ENCODE measurements at regions of chr1 and their contacts with region 1.

Region 1: GRCh38 chr1:24822887-24823286 is 77.6 kb downstream of the CLIC4 start:
- DNase-seq: no peak
- H3K4me3 ChIP-seq: no peak overlapping the region
- H3K27ac ChIP-seq: peak overlapping the region; percentile 42
- H3K4me1 ChIP-seq: peaks cover 30% of the 10 kb centered on the region; the same call in 1 of the 2 replicates
- H3K27me3 ChIP-seq: no peaks in the 10 kb centered on the region

Region 2: GRCh38 chr1:24688621-24689195 is 134.2 kb before region 1 on chr1:
- in situ Hi-C with region 1: loop called (anchors 10 kb)
- DNase-seq: peak; percentile 87
- H3K4me3 ChIP-seq: no peak overlapping the region
- H3K27ac ChIP-seq: no peak overlapping the region
- H3K4me1 ChIP-seq: peaks cover 19% of the 10 kb centered on the region
- H3K27me3 ChIP-seq: no peaks in the 10 kb centered on the region

Region 3: DNA sequence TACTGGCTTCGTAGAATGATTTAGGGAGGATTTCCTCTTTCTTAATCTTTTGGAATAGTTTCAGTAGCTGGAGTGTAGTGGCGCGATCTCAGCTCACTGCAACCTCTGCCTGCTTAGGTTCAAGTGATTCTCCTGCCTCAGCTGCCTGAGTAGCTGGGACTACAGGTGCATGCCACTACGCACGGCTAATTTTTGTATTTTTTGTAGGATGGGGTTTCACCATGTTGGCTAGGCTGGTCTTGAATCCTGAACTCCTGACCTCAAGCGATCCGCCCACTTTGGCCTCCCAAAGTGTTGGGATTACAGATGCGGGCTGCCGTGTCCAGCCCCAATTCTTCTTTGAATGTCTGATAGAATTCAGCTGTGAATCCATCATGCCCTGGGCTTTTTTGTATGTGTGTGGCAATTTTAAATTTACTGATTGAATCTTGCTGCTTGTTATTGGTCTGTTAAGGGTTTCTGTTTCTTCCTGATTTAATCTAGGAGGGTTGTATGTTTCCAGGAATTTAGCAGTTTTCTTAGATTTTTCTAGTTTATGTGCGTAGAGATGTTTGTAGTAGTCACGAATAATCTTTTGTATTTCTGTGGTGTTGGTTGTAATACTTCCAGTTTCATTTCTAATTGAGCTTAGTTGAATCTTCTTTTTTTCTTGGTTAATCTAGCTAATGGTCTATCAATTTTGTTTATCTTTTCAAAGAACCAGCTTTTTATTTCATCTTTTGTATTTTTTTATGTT is 809.0 kb after region 1 on chr1:
- in situ Hi-C with region 1: no loop called
- DNase-seq: no peak
- H3K4me3 ChIP-seq: no peak overlapping the region
- H3K27ac ChIP-seq: no peak overlapping the region
- H3K4me1 ChIP-seq: no peaks in the 10 kb centered on the region
- H3K27me3 ChIP-seq: peaks cover 17% of the 10 kb centered on the region; the same call in 1 of the 2 replicates

Measured in GM23248 (cell line).